ENCODE measurements at regions of chr22 and their contacts with region 1.

Region 1: GRCh38 chr22:42270512-42271417 is at the start of gene TCF20:
- DNase-seq: peak; percentile 86 to 92
- ATAC-seq: peak; percentile 79
- H3K4me3 ChIP-seq: peak within 1 kb of the TSS; percentile 92 to 95
- H3K27ac ChIP-seq: peak within 1 kb of the TSS in 1 of 2 donors; percentile 26
- H3K4me1 ChIP-seq: no peaks in the 10 kb centered on the region
- H3K27me3 ChIP-seq: no peaks in the 10 kb centered on the region
- total RNA-seq, gene TCF20: 29.9 to 42.9 TPM

Region 2: DNA sequence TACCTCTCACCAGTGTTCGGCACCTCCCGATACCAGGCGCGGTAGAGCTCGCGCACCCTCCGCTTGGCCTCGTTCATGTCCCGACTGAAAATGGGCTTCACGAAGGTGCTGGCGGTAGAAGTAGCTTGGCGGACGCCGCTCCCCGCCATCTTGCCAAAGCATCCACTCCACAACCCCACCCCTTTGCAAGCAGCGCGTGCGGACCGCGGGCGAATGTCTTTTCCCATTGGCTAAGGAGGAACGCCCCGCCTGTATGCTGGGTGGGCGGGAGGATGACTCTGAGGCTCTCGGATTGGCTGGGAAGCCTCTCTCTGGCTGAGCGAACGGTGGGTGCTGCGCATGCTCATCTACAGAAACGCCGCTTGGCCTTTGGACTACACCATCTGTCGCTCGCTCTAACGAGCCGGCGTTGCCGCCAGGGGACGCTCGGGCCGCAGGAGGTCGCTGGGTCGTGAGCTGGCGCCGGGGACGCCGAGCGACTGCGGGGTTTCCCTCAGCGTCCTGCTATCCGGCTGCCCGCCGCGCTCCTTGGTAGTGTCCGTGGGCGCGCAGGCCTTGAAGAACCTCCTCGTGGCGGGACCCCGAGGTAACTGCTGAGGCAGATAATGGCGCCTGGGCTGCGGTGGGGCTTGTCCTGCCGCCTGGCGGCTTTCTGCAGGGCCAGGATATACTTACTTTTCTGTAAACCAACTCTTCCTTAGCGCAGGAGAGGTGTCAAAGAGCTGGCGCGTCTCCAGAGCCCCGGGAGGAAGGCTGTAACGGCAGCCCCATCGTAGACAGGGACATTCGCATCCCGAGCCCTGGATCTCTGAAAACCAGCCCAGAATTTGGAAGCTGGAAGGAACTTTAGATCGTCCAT is 179.9 kb before region 1 on chr22 and contains the start of gene NDUFA6:
- intact Hi-C with region 1: loop called in 1 of 2 experiments (anchors 10 kb)
- DNase-seq: peak; percentile 99
- ATAC-seq: peak; percentile 98
- H3K4me3 ChIP-seq: peak within 1 kb of the TSS; percentile 74 to 90
- H3K27ac ChIP-seq: peak within 1 kb of the TSS; percentile 54 to 94
- H3K4me1 ChIP-seq: peaks cover 0 to 3% of the 10 kb centered on the region in 2 donors
- H3K27me3 ChIP-seq: no peaks in the 10 kb centered on the region
- total RNA-seq, gene NDUFA6: 30.6 to 34.1 TPM

Region 3: GRCh38 chr22:42369245-42370041 is 98.7 kb after region 1 on chr22:
- intact Hi-C with region 1: loop called in 1 of 2 experiments (anchors 10 kb)
- DNase-seq: peak; percentile 95
- ATAC-seq: peak; percentile 94
- H3K4me3 ChIP-seq: peak overlapping the region; percentile 49 to 50
- H3K27ac ChIP-seq: no peak overlapping the region
- H3K4me1 ChIP-seq: no peaks in the 10 kb centered on the region
- H3K27me3 ChIP-seq: no peaks in the 10 kb centered on the region

Region 4: GRCh38 chr22:42401535-42402334 is 131.0 kb after region 1 on chr22:
- intact Hi-C with region 1: no loop called
- DNase-seq: no peak
- ATAC-seq: no peak
- H3K4me3 ChIP-seq: no peak overlapping the region
- H3K27ac ChIP-seq: no peak overlapping the region
- H3K4me1 ChIP-seq: no peaks in the 10 kb centered on the region
- H3K27me3 ChIP-seq: no peaks in the 10 kb centered on the region

Measured in aorta (tissue), 5 donors.